Sigmoid colon (tissue), 7 donors: ENCODE measurements at regions of chr11 and their contacts with region 1.

Region 1: GRCh38 chr11:17978553-17979287 is 34.1 kb downstream of the SERGEF start:
- DNase-seq: no peak
- H3K4me3 ChIP-seq: no peak overlapping the region
- H3K27ac ChIP-seq: no peak overlapping the region
- H3K4me1 ChIP-seq: no peaks in the 10 kb centered on the region
- H3K27me3 ChIP-seq: no peaks in the 10 kb centered on the region
- CTCF ChIP-seq: peak in 2 of 4 experiments; percentile 20 to 42
- EP300 ChIP-seq: no peak
- POLR2A ChIP-seq: no peak

Region 2: DNA sequence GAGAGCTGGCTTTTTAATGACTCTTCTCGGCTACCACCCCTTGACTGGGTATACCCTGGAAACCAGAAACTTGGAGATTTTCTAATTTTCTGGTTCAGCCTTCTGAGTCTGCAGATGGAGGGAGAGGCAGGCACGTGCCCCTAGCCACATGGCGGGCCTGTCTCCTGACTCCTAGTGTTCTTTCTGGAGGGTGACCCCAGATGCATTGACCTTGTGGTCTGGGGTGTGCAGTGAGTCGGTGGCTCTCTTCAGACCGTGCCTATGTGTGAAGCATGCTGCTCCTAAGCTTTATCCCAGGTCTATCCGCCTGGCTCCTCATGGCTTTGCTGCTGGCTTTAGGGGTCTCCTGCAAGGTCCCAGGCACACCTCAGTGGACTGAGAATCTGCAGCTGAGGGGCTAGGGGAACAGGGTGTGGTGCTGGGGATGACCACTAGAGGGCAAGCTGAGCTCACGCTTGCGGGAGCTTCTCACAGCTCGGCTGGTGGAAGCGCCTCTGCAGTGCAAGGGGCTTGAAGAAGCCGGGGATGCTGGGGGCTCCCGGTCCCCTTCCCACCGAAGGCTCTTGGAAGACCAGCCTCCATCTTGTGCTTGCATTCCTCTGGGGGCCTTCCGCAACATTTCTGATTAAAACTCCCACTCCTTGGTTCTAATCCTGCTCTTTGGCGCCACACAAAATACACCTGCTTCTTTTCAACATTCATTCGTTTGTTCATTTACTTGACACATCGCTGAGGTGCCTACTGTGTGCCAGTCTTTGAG is 379.8 kb before region 1 on chr11:
- intact Hi-C with region 1: loop called (anchors 5 kb)
- DNase-seq: peak; percentile 73
- H3K4me3 ChIP-seq: no peak overlapping the region
- H3K27ac ChIP-seq: no peak overlapping the region
- H3K4me1 ChIP-seq: no peaks in the 10 kb centered on the region
- H3K27me3 ChIP-seq: no peaks in the 10 kb centered on the region
- CTCF ChIP-seq: peak; percentile 56 to 88 (median 71)
- EP300 ChIP-seq: no peak
- POLR2A ChIP-seq: no peak

Region 3: DNA sequence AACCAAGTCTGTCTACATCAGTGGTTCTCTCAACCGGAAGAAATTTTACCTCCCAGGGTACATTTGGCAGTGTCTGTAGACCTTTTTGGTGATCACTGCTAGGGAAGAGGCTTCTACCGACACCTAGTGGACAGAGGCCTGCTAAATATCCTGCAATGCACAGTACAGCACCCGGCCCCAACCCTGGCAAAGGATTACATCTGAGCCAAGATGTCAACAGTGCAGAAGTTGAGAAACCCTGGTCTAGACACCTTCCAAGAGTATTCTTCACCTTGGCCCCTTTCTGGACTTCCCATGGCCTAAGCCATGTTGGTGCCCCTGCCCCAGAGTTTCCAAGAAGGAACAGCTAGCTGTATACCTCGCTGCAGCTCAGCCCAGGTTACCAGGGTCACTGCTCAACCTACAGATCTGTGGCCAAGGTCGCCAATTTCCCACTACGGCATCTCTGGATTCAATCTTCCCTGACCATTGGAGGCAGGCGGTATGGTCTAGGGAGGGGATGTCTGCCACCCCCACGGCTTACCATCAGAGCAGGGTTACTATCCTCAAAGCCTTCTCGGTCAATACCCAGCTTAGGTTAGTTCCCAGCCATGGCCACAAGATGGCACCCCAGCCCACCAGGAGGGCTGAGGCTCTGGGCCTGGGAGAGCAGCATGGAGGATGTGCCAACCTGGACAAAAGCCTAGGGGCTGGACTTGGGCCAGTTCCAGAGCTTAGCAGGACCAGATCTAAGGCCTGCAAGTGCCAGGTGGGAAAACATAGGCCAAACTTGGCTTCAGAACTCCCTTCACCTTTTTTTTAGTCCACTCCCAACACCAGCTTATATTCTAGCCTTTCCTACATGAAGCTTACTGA is 247.9 kb before region 1 on chr11:
- intact Hi-C with region 1: loop called (anchors 1 kb)
- DNase-seq: peak; percentile 77
- H3K4me3 ChIP-seq: no peak overlapping the region
- H3K27ac ChIP-seq: no peak overlapping the region
- H3K4me1 ChIP-seq: peaks cover 0 to 23% (median 21%) of the 10 kb centered on the region in 4 donors
- H3K27me3 ChIP-seq: peaks cover 7 to 38% (median 19%) of the 10 kb centered on the region in 3 donors
- CTCF ChIP-seq: peak; percentile 54 to 80 (median 67)
- EP300 ChIP-seq: no peak
- POLR2A ChIP-seq: no peak